ENCODE measurements at regions of chr3 and their contacts with region 1.

Region 1: DNA sequence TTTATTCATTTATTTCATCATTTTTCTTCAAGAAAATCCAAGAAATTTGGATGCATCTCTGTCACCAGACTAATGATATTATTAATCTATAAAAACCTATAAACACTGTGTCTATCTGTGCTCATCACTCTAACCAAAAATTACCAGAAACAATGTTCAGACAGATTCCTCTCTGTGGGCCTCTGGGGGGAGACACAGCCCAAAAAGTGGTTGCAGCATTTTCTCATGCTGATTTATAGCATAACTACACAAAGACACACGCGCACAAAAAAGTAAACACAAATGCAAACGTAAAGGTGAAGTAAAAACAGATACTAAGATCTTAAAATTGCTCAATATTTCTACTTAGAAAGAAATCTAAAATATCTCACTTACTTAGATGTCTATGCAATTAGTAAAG is 976.0 kb downstream of the GBE1 start:
- DNase-seq: no peak
- ATAC-seq: no peak
- H3K4me3 ChIP-seq: no peak overlapping the region
- H3K27ac ChIP-seq: no peak overlapping the region
- H3K4me1 ChIP-seq: no peaks in the 10 kb centered on the region
- H3K27me3 ChIP-seq: no peaks in the 10 kb centered on the region; a peak in 1 of 4 replicates
- CTCF ChIP-seq: no peak; a peak in 1 of 6 replicates
- EP300 ChIP-seq: no peak
- POLR2A ChIP-seq: no peak
- RAD21 ChIP-seq: no peak

Region 2: DNA sequence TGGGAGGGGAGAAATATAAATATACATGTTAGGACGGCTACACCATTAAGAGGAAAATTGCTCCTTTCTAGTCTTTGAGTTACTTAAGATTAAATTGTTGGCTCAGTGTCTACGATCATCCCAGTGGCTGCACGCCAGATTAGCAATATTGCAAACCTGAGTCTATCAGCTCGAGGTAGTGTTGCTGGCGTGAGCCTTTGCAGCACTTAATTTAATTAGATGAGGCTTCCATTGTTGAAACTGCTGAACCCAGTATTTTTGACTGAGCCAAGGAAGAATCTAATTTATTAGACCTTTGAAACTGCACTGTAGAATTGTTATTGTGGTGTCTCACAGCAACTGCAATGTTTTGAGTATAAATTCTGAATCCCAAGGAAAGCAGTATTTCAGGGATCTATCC is 235.3 kb before region 1 on chr3:
- CTCF ChIA-PET with region 1: no interaction called
- POLR2A ChIA-PET with region 1: no interaction called
- RAD21 ChIA-PET with region 1: no interaction called
- SMC1A ChIA-PET with region 1: no interaction called
- in situ Hi-C with region 1: no loop called
- intact Hi-C with region 1: no loop called
- DNase-seq: no peak
- ATAC-seq: no peak
- H3K4me3 ChIP-seq: no peak overlapping the region
- H3K27ac ChIP-seq: no peak overlapping the region
- H3K4me1 ChIP-seq: no peaks in the 10 kb centered on the region
- H3K27me3 ChIP-seq: no peaks in the 10 kb centered on the region
- CTCF ChIP-seq: no peak
- EP300 ChIP-seq: no peak
- POLR2A ChIP-seq: no peak
- RAD21 ChIP-seq: no peak

Region 3: GRCh38 chr3:81242871-81243270 is 457.4 kb after region 1 on chr3:
- CTCF ChIA-PET with region 1: no interaction called
- POLR2A ChIA-PET with region 1: no interaction called
- RAD21 ChIA-PET with region 1: no interaction called
- SMC1A ChIA-PET with region 1: no interaction called
- in situ Hi-C with region 1: no loop called
- intact Hi-C with region 1: loop called (anchors 5 kb)
- DNase-seq: no peak
- ATAC-seq: peak; percentile 60
- H3K4me3 ChIP-seq: no peak overlapping the region
- H3K27ac ChIP-seq: no peak overlapping the region
- H3K4me1 ChIP-seq: no peaks in the 10 kb centered on the region
- H3K27me3 ChIP-seq: no peaks in the 10 kb centered on the region
- CTCF ChIP-seq: peak in 2 of 3 experiments; percentile 22 to 42; a peak in 3 of 6 replicates
- EP300 ChIP-seq: no peak
- POLR2A ChIP-seq: no peak
- RAD21 ChIP-seq: peak; percentile 43; the same call in 1 of the 2 replicates